Heart left ventricle (tissue), 16 donors: ENCODE measurements at regions of chr7 and their contacts with region 1.

Region 1: GRCh38 chr7:100119062-100119700 is at the starts of genes CNPY4 and TAF6:
- DNase-seq: peak; percentile 96 to 98 (median 97)
- ATAC-seq: peak; percentile 90 to 97 (median 94)
- H3K4me3 ChIP-seq: peak within 1 kb of the TSS; percentile 48 to 89 (median 78)
- H3K27ac ChIP-seq: peak within 1 kb of the TSS; percentile 83 to 98 (median 88)
- H3K4me1 ChIP-seq: peaks cover 0 to 21% (median 16%) of the 10 kb centered on the region in 12 donors
- H3K27me3 ChIP-seq: no peaks in the 10 kb centered on the region
- CTCF ChIP-seq: peak in 1 of 12 donors; percentile 6
- POLR2A ChIP-seq: peak in 1 of 2 donors; percentile 61
- total RNA-seq, gene CNPY4: 5.9 to 9.5 (median 8.3) TPM
- total RNA-seq, gene TAF6: 24.9 to 80.9 (median 34.1) TPM

Region 2: DNA sequence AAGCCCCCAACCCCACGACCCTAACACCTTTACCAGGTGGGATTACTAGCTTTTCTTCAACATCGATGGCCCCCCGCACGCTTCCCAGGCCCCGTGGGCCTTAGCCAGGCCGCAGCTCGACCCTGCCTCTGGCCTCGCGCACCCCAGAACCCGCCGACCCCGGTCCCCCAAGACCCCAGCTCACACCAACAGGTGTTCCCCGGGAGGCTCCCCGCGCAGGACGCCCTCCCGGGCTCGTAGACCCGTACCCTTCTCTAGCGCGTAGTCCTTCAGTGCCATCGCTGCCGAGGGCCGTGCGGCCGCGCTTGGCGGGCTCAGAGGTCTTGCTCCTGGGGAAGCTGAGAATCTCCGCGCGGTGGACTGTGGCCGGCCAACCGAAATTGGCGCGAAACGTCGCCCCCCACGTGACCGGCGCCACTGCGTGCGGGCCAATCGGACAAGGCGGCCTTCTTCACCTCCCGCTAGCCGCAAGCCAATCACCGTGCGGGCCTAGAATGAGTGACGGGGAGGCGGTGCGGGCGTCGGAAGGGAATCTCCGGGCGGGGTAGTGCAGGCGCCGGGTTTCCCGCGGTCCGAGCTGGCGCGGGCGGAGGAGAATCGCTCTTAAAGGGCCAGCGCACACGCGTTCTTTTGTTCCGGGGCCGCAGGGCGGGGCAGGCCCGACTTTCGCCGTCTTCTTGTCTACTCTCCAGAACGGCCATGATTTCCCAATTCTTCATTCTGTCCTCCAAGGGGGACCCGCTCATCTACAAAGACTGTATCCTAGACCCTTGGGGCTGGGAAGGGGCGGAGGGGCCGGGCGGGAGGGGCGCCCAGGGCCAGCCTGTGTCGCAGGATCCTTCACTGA is 17.9 kb before region 1 on chr7 and contains the starts of genes AP4M1 and MCM7:
- intact Hi-C with region 1: loop called in 3 of 10 experiments (anchors 1 to 2 kb)
- DNase-seq: peak; percentile 99
- ATAC-seq: peak; percentile 94 to 96 (median 96)
- H3K4me3 ChIP-seq: peak within 1 kb of the TSS; percentile 59 to 93 (median 76)
- H3K27ac ChIP-seq: peak within 1 kb of the TSS; percentile 81 to 97 (median 93)
- H3K4me1 ChIP-seq: peaks cover 0 to 28% (median 21%) of the 10 kb centered on the region in 12 donors
- H3K27me3 ChIP-seq: no peaks in the 10 kb centered on the region
- CTCF ChIP-seq: no peak
- POLR2A ChIP-seq: peak in 1 of 2 donors; percentile 40
- total RNA-seq, gene AP4M1: 8.9 to 19.3 (median 12.3) TPM
- total RNA-seq, gene MCM7: 12.8 to 34.4 (median 17.2) TPM